ENCODE measurements at regions of chr18 and their contacts with region 1.

Region 1: GRCh38 chr18:76977108-76977621 is 154.8 kb downstream of the ZNF236 start:
- DNase-seq: no peak
- H3K4me3 ChIP-seq: no peak overlapping the region
- H3K27ac ChIP-seq: no peak overlapping the region
- H3K4me1 ChIP-seq: peaks cover 57% of the 10 kb centered on the region
- CTCF ChIP-seq: no peak

Region 2: DNA sequence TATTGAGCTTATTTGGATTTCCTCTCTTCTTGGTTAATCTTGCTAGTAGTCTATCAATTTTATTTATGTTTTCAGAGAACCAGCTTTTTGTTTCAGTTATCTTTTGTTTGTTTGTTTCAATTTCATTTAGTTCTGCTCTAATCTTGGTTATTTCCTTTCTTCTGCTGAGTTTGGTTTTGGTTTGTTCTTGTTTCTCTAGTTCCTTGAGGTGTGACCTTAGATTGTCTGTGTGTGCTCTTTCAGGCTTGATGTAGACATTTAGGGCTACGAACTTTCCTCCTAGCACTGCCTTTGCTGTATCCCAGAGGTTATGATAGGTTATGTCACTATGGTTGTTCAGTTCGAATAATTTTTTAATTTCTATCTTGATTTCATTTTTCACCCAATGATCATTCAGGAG is 13.2 kb before region 1 on chr18:
- CTCF ChIA-PET with region 1: interaction called, 10 read pairs
- POLR2A ChIA-PET with region 1: interaction called, 13 read pairs
- intact Hi-C with region 1: loop called (anchors 1 kb)
- DNase-seq: no peak
- H3K4me3 ChIP-seq: peak overlapping the region; percentile 19
- H3K27ac ChIP-seq: peak overlapping the region; percentile 30
- H3K4me1 ChIP-seq: peaks cover 48% of the 10 kb centered on the region
- CTCF ChIP-seq: no peak

Region 3: DNA sequence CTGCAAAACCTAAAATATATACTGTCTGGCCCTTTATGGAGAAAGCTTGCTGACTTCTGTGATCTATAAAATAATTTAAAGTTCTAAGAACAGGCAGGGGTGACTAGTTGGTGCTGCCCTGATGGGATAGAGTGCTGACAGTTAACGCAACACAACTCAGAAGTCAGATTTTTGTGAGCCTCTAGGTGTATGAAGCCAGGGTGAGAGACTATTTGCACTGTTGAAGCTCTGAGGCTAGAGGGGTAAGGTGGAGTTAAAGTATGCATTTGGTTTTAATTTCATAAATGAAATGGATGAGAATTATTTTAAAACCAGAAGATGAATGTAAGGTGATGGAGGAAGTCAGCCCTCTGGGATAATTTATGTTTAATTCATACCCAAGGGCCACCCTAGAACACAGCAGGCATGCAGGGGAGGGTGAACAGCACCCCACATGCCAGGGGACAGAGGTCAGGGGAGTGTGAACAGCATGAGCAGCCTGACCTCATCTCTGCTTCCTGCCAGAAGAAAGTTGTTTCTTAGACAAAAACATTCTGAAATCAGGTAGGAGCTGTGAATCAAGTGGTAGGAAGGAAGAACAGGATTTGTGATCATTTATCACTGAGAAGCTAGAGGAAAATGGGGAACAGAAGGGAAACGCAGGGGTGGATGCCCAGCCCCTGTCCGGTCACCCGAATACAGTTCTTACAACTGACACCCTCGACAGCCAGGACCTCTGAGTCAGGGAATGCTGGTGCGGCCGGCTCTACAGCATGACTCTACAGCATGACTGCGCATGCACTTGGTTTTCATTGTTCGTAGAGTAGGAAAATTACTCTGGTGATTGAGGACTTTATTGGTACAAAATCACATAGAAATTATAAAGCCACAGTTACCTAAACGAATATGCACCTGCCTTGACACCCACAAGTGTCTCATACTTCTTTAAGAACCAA is 62.3 kb after region 1 on chr18:
- CTCF ChIA-PET with region 1: no interaction called
- POLR2A ChIA-PET with region 1: no interaction called
- intact Hi-C with region 1: no loop called
- DNase-seq: no peak
- H3K4me3 ChIP-seq: no peak overlapping the region
- H3K27ac ChIP-seq: no peak overlapping the region
- H3K4me1 ChIP-seq: peaks cover 4% of the 10 kb centered on the region
- CTCF ChIP-seq: no peak

Measured in OCI-LY7 (cell line).